Posterior vena cava (tissue), 2 donors: ENCODE measurements at regions of chr2 and their contacts with region 1.

Region 1: DNA sequence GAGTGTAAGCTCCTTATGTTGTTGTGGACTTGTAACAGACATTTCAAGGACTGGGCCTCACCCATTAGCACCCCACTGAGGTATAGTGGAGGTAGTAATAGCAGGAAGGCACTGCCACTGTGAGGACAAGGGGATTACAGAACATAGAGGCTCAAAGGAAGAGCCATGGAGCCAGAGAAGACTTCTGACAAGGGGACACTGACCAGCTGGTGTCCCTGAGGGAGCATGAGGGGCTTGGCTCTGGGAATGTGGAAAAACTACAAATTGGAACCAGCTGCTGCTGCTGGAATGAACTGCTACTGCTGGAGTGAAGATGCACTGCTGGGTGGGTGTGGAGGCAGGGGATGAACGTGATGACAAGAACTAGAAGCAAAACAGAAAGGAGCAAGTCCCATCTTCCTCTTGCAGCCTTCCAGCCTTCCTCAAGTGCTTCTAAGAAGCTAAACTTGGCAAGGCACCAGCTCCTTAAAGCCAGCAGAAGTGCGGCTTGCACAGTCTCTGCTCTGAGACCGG is 167.3 kb upstream of the NOSTRIN start:
- DNase-seq: peak; percentile 73

Region 2: GRCh38 chr2:168669151-168669550 is 34.0 kb after region 1 on chr2:
- intact Hi-C with region 1: loop called in 1 of 2 experiments (anchors 1 kb)
- DNase-seq: no peak